ENCODE measurements at regions of chr1 and their contacts with region 1.

Region 1: DNA sequence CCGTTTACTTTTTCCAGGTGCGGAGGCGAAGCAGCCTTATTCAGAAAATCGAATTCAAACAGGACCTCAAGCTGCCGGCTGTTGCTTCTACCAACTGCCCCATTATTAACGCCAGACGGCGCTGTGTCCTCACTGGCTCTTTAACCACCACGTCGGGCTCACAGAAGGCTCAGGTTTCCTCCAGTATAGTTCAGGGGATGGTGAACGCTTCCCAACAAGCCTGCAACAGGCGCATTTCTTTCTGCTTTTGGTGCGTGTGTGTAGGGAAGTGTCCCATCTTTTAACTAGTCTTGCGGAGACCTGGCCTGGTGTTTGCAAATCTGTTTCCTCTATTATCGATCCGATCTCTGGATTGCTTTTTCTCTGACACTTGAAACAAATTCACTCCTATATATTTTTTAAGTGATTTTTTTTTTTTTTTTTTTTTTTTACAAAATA is 791 bp upstream of the STUM start:
- DNase-seq: peak; percentile 74 to 82
- H3K4me3 ChIP-seq: peak overlapping the region in 2 of 3 donors; percentile 59 to 78
- H3K27ac ChIP-seq: no peak overlapping the region
- H3K4me1 ChIP-seq: peaks cover 0 to 8% of the 10 kb centered on the region in 2 donors
- H3K27me3 ChIP-seq: peaks cover 0 to 4% of the 10 kb centered on the region in 2 donors
- CTCF ChIP-seq: peak; percentile 67 to 90 (median 89)
- POLR2A ChIP-seq: no peak

Region 2: GRCh38 chr1:225299624-225300023 is 1248.1 kb before region 1 on chr1:
- intact Hi-C with region 1: loop called (anchors 10 kb)
- DNase-seq: no peak
- H3K4me3 ChIP-seq: no peak overlapping the region
- H3K27ac ChIP-seq: no peak overlapping the region
- H3K4me1 ChIP-seq: no peaks in the 10 kb centered on the region
- H3K27me3 ChIP-seq: no peaks in the 10 kb centered on the region
- CTCF ChIP-seq: no peak
- POLR2A ChIP-seq: no peak

Region 3: GRCh38 chr1:225866061-225866837 is 681.5 kb before region 1 on chr1:
- intact Hi-C with region 1: no loop called
- DNase-seq: no peak
- H3K4me3 ChIP-seq: no peak overlapping the region
- H3K27ac ChIP-seq: no peak overlapping the region
- H3K4me1 ChIP-seq: no peaks in the 10 kb centered on the region
- H3K27me3 ChIP-seq: no peaks in the 10 kb centered on the region
- CTCF ChIP-seq: no peak
- POLR2A ChIP-seq: no peak

Region 4: DNA sequence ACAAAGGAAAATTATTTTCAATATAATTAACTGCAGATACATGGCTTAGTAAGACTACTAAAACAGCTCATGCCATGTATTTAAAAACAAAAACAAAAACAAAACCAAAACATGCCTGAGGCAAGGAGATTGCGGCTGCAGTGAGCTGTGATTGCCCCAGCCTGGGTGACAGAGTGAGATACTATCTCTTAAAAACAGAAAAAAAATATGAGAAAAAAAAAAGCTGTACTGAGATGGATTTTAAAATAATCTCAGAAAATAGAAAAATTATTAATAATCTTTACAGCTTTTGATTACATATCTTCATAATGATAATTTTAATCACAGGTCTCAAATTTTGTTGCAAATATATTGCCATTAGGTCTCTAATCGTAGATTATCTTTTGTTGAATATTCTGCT is 214.8 kb before region 1 on chr1:
- intact Hi-C with region 1: no loop called
- DNase-seq: no peak
- H3K4me3 ChIP-seq: no peak overlapping the region
- H3K27ac ChIP-seq: no peak overlapping the region
- H3K4me1 ChIP-seq: no peaks in the 10 kb centered on the region
- H3K27me3 ChIP-seq: no peaks in the 10 kb centered on the region
- CTCF ChIP-seq: no peak
- POLR2A ChIP-seq: no peak

Region 5: GRCh38 chr1:226349801-226350518 is 197.8 kb before region 1 on chr1:
- intact Hi-C with region 1: no loop called
- DNase-seq: no peak
- H3K4me3 ChIP-seq: no peak overlapping the region
- H3K27ac ChIP-seq: peak overlapping the region in 1 of 2 donors; percentile 61
- H3K4me1 ChIP-seq: no peaks in the 10 kb centered on the region
- H3K27me3 ChIP-seq: no peaks in the 10 kb centered on the region
- CTCF ChIP-seq: no peak
- POLR2A ChIP-seq: no peak

Region 6: GRCh38 chr1:226608699-226609505 is 61.1 kb after region 1 on chr1:
- intact Hi-C with region 1: loop called (anchors 10 kb)
- DNase-seq: no peak
- H3K4me3 ChIP-seq: no peak overlapping the region
- H3K27ac ChIP-seq: no peak overlapping the region
- H3K4me1 ChIP-seq: peaks cover 7 to 10% of the 10 kb centered on the region in 2 donors
- H3K27me3 ChIP-seq: no peaks in the 10 kb centered on the region
- CTCF ChIP-seq: peak; percentile 44 to 59 (median 57)
- POLR2A ChIP-seq: no peak